Heart left ventricle (tissue), 16 donors: ENCODE measurements at regions of chr2 and their contacts with region 1.

Region 1: GRCh38 chr2:162545250-162545649 is 201.3 kb downstream of the GCA start:
- DNase-seq: no peak
- ATAC-seq: no peak
- H3K4me3 ChIP-seq: no peak overlapping the region
- H3K27ac ChIP-seq: no peak overlapping the region
- H3K4me1 ChIP-seq: no peaks in the 10 kb centered on the region
- H3K27me3 ChIP-seq: no peaks in the 10 kb centered on the region
- CTCF ChIP-seq: no peak
- POLR2A ChIP-seq: no peak

Region 2: DNA sequence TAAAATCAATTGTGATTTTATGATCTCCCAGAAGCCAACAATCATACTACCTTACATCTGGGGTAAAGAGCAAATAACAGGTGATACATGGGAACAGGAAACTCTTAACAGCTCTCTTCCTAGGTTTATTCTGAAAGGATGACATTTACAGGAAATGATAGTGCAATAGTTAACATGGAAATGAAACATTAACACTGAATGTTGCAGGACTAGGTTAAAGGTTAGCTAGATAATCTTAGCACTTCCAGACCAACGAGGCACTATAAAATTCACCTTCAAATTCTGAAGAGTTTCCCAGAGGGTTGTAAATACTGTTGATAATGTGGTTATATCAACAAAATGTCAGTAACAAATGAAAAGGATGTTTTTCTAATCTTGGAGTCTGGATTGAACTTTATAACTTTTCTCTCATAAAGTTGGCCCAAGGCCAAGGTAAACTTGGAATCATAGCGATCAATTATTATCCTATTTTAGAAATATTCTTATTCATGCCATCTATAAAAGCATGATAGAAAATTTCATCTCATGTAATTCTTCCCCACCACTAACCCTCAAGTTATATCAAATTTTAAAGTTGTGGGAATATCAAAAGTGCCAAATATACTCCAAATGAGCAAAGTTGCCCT is 360.3 kb before region 1 on chr2:
- intact Hi-C with region 1: no loop called
- DNase-seq: no peak
- ATAC-seq: no peak
- H3K4me3 ChIP-seq: no peak overlapping the region
- H3K27ac ChIP-seq: no peak overlapping the region
- H3K4me1 ChIP-seq: peaks cover 0 to 3% (median 0%) of the 10 kb centered on the region in 12 donors
- H3K27me3 ChIP-seq: no peaks in the 10 kb centered on the region
- CTCF ChIP-seq: no peak
- POLR2A ChIP-seq: no peak

Region 3: DNA sequence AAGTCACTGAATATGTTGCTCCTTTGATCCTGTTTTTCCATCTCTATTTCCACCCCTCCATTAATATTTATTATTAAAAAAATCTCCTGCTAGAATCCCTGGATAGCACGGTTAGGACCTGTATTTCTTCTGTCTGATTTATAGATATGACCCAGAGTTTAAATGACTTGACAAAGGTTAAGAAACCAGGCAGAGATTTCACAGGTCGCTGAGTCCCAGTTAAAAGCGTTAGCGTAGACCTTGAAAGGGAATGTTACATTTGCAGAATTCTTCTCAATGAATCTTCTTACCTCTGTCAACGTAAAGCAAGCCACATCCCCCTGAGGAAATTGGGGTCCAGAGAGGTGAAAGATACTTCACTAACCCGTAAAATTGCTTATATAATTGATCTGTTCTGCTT is 18.9 kb after region 1 on chr2:
- intact Hi-C with region 1: loop called in 1 of 10 experiments (anchors 2 kb)
- DNase-seq: no peak
- ATAC-seq: no peak
- H3K4me3 ChIP-seq: no peak overlapping the region
- H3K27ac ChIP-seq: no peak overlapping the region
- H3K4me1 ChIP-seq: no peaks in the 10 kb centered on the region
- H3K27me3 ChIP-seq: no peaks in the 10 kb centered on the region
- CTCF ChIP-seq: no peak
- POLR2A ChIP-seq: no peak

Region 4: DNA sequence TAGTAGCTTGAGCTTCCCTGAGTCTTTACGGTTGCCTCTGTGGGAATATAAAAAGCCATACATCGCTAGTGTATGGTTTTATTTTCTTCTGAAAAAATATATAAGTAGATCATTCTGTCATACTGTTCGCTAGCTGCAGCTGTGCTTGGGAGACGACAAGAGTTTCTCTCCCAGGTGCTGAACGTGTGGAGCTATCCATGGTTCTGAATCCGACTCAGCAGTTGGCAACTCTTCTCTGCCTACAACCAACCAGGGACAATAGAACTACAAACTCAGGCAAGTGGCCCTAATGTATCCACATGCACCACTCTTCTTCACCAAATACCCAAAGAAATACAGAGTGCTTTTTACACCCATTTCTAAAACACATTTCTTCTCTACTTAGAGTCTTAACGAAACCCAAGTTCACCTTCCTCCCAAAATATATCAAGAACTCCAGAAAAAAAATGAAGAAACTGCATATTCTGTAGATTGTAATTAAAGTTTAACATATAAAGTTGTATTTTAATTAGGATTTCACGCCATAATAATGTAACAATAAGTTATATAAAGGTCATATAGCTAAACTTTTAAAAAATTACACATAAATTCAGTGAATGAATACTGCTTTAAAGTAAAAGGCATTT is 295.5 kb after region 1 on chr2:
- intact Hi-C with region 1: no loop called
- DNase-seq: peak in 3 of 5 donors; percentile 18 to 29 (median 27)
- ATAC-seq: peak in 2 of 4 donors; percentile 48 to 68
- H3K4me3 ChIP-seq: no peak overlapping the region
- H3K27ac ChIP-seq: no peak overlapping the region
- H3K4me1 ChIP-seq: peaks cover 0 to 12% (median 0%) of the 10 kb centered on the region in 12 donors
- H3K27me3 ChIP-seq: peaks cover 6 to 33% (median 18%) of the 10 kb centered on the region in 9 donors
- CTCF ChIP-seq: no peak
- POLR2A ChIP-seq: no peak